ENCODE measurements at regions of chr2 and their contacts with region 1.

Region 1: GRCh38 chr2:56580242-56580641 is 396.5 kb downstream of the CCDC85A start:
- DNase-seq: no peak
- H3K4me3 ChIP-seq: no peak overlapping the region
- H3K27ac ChIP-seq: no peak overlapping the region
- H3K4me1 ChIP-seq: no peaks in the 10 kb centered on the region
- H3K27me3 ChIP-seq: no peaks in the 10 kb centered on the region
- CTCF ChIP-seq: no peak
- POLR2A ChIP-seq: no peak

Region 2: GRCh38 chr2:54809819-54810218 is 1770.4 kb before region 1 on chr2:
- intact Hi-C with region 1: loop called (anchors 5 kb)
- DNase-seq: no peak
- H3K4me3 ChIP-seq: no peak overlapping the region
- H3K27ac ChIP-seq: no peak overlapping the region
- H3K4me1 ChIP-seq: no peaks in the 10 kb centered on the region
- H3K27me3 ChIP-seq: no peaks in the 10 kb centered on the region
- CTCF ChIP-seq: no peak
- POLR2A ChIP-seq: no peak

Measured in vagina (tissue), 2 donors.